Naive thymus-derived CD4-positive, alpha-beta T cell (primary cell): ENCODE measurements at regions of chr5 and their contacts with region 1.

Region 1: DNA sequence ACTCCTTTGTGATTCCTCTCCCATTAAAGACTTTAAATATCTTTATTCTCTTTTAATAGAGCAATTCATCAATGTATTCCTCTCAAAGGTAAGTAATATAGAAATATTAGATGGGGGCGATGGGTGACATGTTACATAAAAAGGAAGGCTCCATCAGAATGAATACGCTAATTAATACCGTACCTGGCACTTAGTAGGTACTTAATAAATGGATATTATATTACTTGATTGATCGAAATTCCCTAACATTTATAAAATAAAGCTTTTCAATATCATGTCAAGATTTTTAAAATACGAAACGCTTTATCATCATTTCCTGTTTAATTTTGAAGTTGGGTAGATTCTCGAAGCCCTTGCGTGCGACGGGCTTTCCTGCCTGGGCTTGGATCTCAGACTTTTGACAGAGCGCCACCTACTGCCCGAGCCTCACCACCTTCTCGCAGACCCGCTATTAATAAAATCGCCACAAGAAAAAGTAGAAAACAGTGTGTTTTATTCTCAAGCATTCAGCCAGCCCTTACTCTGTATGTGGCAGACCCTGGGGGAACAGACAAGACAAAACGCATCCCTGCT is 99.4 kb downstream of the C5orf15 start:
- DNase-seq: peak; percentile 42 to 70 (median 62)
- ATAC-seq: peak; percentile 67
- H3K4me3 ChIP-seq: no peak overlapping the region
- H3K4me3 Mint-ChIP-seq: peak overlapping the region in 4 of 10 donors; percentile 4 to 33 (median 20)
- H3K27ac ChIP-seq: no peak overlapping the region
- H3K27ac Mint-ChIP-seq: peak overlapping the region in 1 of 9 donors; percentile 25
- H3K4me1 ChIP-seq: no peaks in the 10 kb centered on the region
- H3K4me1 Mint-ChIP-seq: peaks cover 0 to 19% (median 6%) of the 10 kb centered on the region in 7 donors
- H3K27me3 ChIP-seq: no peaks in the 10 kb centered on the region
- H3K27me3 Mint-ChIP-seq: peaks cover 0 to 31% (median 3%) of the 10 kb centered on the region in 5 donors

Region 2: DNA sequence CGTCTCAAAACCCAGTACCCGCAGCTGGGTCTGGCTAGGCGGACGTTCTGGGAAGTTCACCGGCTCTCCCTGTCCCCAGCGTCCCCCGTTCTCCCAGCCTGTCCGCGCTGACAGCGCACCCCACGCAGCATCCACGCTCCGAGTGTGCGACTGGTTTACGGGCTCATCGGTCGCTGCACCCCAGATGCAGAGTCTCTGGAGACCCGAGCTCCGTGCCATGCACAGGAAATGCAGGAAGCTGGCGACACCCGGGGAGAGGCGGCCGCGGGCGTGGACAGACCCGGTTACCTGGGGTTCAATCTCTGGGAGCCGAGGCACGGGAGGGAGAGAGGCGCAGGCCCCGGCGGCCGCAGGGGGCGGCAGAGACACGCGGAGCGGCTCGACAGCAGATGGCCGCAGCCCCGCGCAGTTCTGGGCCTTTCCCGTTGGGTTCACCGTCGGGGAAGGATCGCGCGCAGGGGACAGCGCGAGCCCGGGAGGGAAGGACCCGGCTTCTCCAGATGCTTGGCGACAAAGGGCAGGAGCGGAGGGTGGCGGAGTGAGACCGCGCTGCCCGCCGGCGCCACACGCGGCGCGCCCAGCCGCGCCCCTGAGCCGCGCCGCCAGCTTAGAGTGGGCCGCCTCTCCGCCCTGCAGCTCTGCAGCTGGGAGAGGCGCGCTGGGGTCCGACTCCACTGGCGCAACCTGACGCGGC is 1039.1 kb before region 1 on chr5:
- CTCF ChIA-PET with region 1: no interaction called
- POLR2A ChIA-PET with region 1: no interaction called
- intact Hi-C with region 1: loop called in 1 of 2 experiments (anchors 5 kb)
- DNase-seq: peak; percentile 43 to 78 (median 65)
- ATAC-seq: peak; percentile 93
- H3K4me3 ChIP-seq: peak overlapping the region; percentile 65
- H3K4me3 Mint-ChIP-seq: peak overlapping the region; percentile 79 to 93 (median 88)
- H3K27ac ChIP-seq: no peak overlapping the region
- H3K27ac Mint-ChIP-seq: peak overlapping the region in 3 of 9 donors; percentile 49 to 67 (median 52)
- H3K4me1 ChIP-seq: no peaks in the 10 kb centered on the region
- H3K4me1 Mint-ChIP-seq: peaks cover 0 to 19% (median 12%) of the 10 kb centered on the region in 7 donors
- H3K27me3 ChIP-seq: peaks cover 2 to 12% of the 10 kb centered on the region in 2 donors
- H3K27me3 Mint-ChIP-seq: peaks cover 35 to 62% (median 42%) of the 10 kb centered on the region in 5 donors

Region 3: GRCh38 chr5:133610489-133611356 is 258.3 kb before region 1 on chr5:
- CTCF ChIA-PET with region 1: no interaction called
- POLR2A ChIA-PET with region 1: no interaction called
- intact Hi-C with region 1: loop called in 1 of 2 experiments (anchors 5 kb)
- DNase-seq: peak in 5 of 9 donors; percentile 8 to 48 (median 16)
- ATAC-seq: peak; percentile 58
- H3K4me3 ChIP-seq: peak overlapping the region; percentile 50
- H3K4me3 Mint-ChIP-seq: peak overlapping the region; percentile 49 to 87 (median 72)
- H3K27ac ChIP-seq: no peak overlapping the region
- H3K27ac Mint-ChIP-seq: no peak overlapping the region
- H3K4me1 ChIP-seq: no peaks in the 10 kb centered on the region
- H3K4me1 Mint-ChIP-seq: peaks cover 0 to 21% (median 6%) of the 10 kb centered on the region in 7 donors
- H3K27me3 ChIP-seq: peaks cover 7 to 13% of the 10 kb centered on the region in 2 donors
- H3K27me3 Mint-ChIP-seq: peaks cover 58 to 75% (median 63%) of the 10 kb centered on the region in 5 donors

Region 4: DNA sequence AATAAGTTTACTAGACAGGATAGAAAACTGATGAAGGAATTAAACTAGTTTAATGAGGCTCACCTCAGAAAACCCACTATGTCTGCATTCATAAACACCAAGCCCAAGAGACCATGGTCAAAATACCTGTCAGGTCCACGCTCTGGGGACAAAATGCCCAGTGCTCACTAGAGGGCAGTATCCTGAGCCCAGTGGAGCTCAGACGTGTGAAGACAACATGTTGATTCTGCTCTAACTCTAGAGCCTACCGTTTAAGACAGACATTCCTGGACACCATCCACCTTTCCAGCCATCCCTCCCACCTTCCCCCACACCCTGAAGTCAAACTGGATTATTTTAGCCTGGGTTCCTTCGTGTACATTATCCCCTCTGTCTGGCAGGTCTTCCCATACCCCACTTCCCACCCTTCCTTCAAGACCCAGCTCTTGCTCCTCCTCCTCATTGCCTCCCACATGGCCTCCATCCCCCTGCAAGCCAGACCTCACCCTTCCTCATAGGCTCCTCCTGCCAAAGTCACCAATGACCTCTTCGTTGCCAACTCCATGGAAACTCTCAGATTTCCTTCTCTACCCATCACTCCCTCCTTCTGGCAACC is 114.4 kb before region 1 on chr5:
- CTCF ChIA-PET with region 1: interaction called, 5 read pairs
- POLR2A ChIA-PET with region 1: no interaction called
- intact Hi-C with region 1: loop called (anchors 1 kb)
- DNase-seq: peak in 1 of 9 donors; percentile 3
- ATAC-seq: peak; percentile 42
- H3K4me3 ChIP-seq: no peak overlapping the region
- H3K4me3 Mint-ChIP-seq: no peak overlapping the region
- H3K27ac ChIP-seq: no peak overlapping the region
- H3K27ac Mint-ChIP-seq: no peak overlapping the region
- H3K4me1 ChIP-seq: no peaks in the 10 kb centered on the region
- H3K4me1 Mint-ChIP-seq: peaks cover 0 to 4% (median 0%) of the 10 kb centered on the region in 7 donors
- H3K27me3 ChIP-seq: no peaks in the 10 kb centered on the region
- H3K27me3 Mint-ChIP-seq: peaks cover 15 to 36% (median 25%) of the 10 kb centered on the region in 5 donors

Region 5: GRCh38 chr5:133831491-133832224 is 37.4 kb before region 1 on chr5:
- CTCF ChIA-PET with region 1: no interaction called
- POLR2A ChIA-PET with region 1: no interaction called
- intact Hi-C with region 1: no loop called
- DNase-seq: no peak
- ATAC-seq: no peak
- H3K4me3 ChIP-seq: no peak overlapping the region
- H3K4me3 Mint-ChIP-seq: no peak overlapping the region
- H3K27ac ChIP-seq: no peak overlapping the region
- H3K27ac Mint-ChIP-seq: no peak overlapping the region
- H3K4me1 ChIP-seq: no peaks in the 10 kb centered on the region
- H3K4me1 Mint-ChIP-seq: peaks cover 0 to 10% (median 1%) of the 10 kb centered on the region in 7 donors
- H3K27me3 ChIP-seq: no peaks in the 10 kb centered on the region
- H3K27me3 Mint-ChIP-seq: peaks cover 5 to 24% (median 10%) of the 10 kb centered on the region in 5 donors